Right ventricle myocardium inferior (tissue), 1 donor: ENCODE measurements at regions of chr7 and their contacts with region 1.

Region 1: GRCh38 chr7:75711656-75712514 is 26.9 kb downstream of the HIP1 start:
- DNase-seq: no peak
- ATAC-seq: peak; percentile 89

Region 2: DNA sequence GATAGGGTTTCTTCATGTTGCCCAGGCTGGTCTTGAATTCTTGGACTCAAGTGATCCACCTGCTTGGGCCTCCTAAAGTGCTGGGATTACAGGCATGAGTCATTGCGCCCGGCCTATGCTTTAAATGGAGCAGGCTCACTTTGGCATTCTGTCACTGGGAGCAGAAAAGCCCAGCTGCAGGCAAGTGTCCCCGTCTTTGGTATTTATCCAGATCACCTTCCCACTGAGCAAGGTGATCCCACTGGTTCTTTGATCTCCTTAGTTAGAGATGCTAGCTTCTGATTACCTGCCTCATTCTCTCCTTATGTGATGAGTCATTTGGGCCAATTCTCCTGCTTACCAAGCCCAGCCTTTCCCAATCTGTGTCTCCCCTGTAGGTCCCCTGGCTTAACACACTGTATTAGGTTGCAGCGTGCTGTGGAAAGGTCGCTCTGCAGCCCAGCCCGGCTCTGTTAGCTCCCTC is 180.5 kb before region 1 on chr7:
- intact Hi-C with region 1: no loop called
- DNase-seq: no peak
- ATAC-seq: no peak

Region 3: GRCh38 chr7:75650681-75651080 is 61.2 kb before region 1 on chr7:
- intact Hi-C with region 1: loop called (anchors 10 kb)
- DNase-seq: no peak
- ATAC-seq: peak; percentile 87

Region 4: GRCh38 chr7:75669579-75669978 is 42.3 kb before region 1 on chr7:
- intact Hi-C with region 1: loop called (anchors 2 kb)
- DNase-seq: no peak
- ATAC-seq: no peak

Region 5: DNA sequence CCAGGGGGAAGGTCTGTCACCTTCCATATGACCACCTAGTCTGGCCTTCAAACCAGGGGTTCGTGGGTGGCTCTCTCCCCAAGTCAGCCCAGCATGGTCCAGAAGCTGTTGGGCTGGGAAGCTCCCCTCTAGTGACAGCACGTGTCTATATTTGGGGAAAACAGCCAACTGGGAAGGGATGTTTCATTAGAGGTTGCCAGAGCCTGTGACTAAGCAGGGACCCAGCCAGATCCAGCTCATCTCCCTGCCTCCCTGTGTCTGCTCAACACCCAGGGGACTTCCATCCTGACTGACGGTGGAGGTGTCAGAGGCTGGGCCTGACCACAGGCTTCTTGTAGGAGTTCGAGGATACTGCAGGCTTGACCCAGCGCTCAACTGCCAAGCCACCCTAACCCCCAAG is 325.4 kb after region 1 on chr7:
- intact Hi-C with region 1: no loop called
- DNase-seq: no peak
- ATAC-seq: peak; percentile 27